Upper lobe of right lung (tissue), 1 donor: ENCODE measurements at regions of chr5 and their contacts with region 1.

Region 1: GRCh38 chr5:172697123-172698121 is 56.4 kb downstream of the NEURL1B start:
- DNase-seq: peak; percentile 93
- ATAC-seq: peak; percentile 95
- H3K4me3 ChIP-seq: peak overlapping the region; percentile 72
- H3K27ac ChIP-seq: peak overlapping the region; percentile 88
- H3K4me1 ChIP-seq: peaks cover 43% of the 10 kb centered on the region
- H3K27me3 ChIP-seq: no peaks in the 10 kb centered on the region
- CTCF ChIP-seq: peak; percentile 93

Region 2: DNA sequence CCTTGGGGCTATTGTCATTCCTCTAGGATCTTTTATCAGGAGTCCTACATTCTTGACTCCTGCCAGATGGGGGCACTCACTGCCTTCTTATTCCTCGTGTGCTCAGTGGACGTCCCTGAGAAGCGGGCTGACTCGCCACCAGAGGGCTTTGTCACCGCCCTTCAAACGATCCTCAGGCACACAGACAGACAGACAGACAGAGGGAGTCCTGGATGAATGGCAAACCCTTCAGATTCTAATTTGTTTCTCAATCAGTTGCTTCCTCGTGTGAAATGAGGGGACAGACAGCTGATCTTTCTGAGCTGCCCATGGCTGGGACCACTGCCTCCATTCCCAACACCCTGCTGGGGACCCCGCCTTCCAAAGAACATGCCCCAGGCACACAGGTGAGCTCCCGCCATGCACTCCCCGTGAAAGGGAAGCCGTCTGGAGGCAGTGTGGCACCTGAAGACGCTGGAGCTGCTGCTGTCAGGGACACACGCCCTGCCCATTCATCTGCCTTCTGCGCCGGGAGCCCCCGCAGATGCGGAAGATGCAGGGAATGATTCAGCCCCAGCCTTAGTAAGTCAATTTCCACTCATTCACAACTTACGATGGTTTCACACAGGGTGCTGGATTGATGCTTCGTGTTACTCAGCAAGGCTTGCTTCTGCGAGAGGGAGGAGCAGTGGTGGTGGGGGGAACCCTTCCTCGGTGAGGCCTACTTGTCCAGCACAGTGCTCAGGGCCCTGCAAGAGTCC is 218.2 kb before region 1 on chr5:
- intact Hi-C with region 1: loop called (anchors 5 kb)
- DNase-seq: peak; percentile 85
- ATAC-seq: peak; percentile 99
- H3K4me3 ChIP-seq: no peak overlapping the region
- H3K27ac ChIP-seq: no peak overlapping the region
- H3K4me1 ChIP-seq: no peaks in the 10 kb centered on the region
- H3K27me3 ChIP-seq: no peaks in the 10 kb centered on the region
- CTCF ChIP-seq: peak; percentile 78

Region 3: GRCh38 chr5:172833686-172834414 is 136.4 kb after region 1 on chr5 and contains the start of gene ERGIC1:
- intact Hi-C with region 1: no loop called
- DNase-seq: peak; percentile 95
- ATAC-seq: peak; percentile 89
- H3K4me3 ChIP-seq: peak within 1 kb of the TSS; percentile 96
- H3K27ac ChIP-seq: peak within 1 kb of the TSS; percentile 92
- H3K4me1 ChIP-seq: peaks cover 32% of the 10 kb centered on the region
- H3K27me3 ChIP-seq: no peaks in the 10 kb centered on the region
- CTCF ChIP-seq: no peak
- total RNA-seq, gene ERGIC1: 186 TPM